WTC11 (cell line): ENCODE measurements at regions of chr21 and their contacts with region 1.

Region 1: GRCh38 chr21:38159355-38159754 is 97.4 kb upstream of the KCNJ15 start:
- DNase-seq: peak; percentile 71
- ATAC-seq: peak; percentile 82
- H3K4me3 Mint-ChIP-seq: no peak overlapping the region
- H3K27ac Mint-ChIP-seq: no peak overlapping the region
- H3K4me1 Mint-ChIP-seq: no peaks in the 10 kb centered on the region
- H3K27me3 Mint-ChIP-seq: peaks cover 2% of the 10 kb centered on the region; the same call in 1 of the 2 replicates
- CTCF ChIP-seq: peak; percentile 79

Region 2: GRCh38 chr21:38037416-38037815 is 121.9 kb before region 1 on chr21:
- CTCF ChIA-PET with region 1: no interaction called
- POLR2A ChIA-PET with region 1: no interaction called
- DNase-seq: no peak
- ATAC-seq: no peak
- H3K4me3 Mint-ChIP-seq: no peak overlapping the region
- H3K27ac Mint-ChIP-seq: no peak overlapping the region
- H3K4me1 Mint-ChIP-seq: peaks cover 13% of the 10 kb centered on the region
- H3K27me3 Mint-ChIP-seq: no peaks in the 10 kb centered on the region
- CTCF ChIP-seq: no peak

Region 3: DNA sequence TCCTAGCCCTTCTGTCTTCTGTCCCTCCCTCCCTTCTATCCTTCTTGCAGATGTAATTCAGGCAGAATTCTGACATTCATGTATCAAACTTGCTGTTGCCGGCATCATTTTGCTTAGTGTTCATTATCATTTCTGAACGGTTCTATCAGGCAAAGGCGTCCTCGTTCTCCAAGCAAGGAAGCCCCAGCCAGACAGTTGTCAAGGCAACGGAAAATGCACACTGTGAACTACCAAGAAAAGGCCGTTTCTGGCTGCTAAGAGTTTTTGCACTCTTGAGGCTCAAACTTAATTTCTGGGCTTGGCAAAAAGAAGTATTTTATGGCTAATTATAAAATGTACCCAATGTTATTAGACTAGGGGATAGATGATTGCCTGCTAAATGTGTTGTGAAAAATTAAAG is 67.3 kb before region 1 on chr21:
- CTCF ChIA-PET with region 1: no interaction called
- POLR2A ChIA-PET with region 1: no interaction called
- DNase-seq: no peak
- ATAC-seq: no peak
- H3K4me3 Mint-ChIP-seq: no peak overlapping the region
- H3K27ac Mint-ChIP-seq: no peak overlapping the region
- H3K4me1 Mint-ChIP-seq: no peaks in the 10 kb centered on the region
- H3K27me3 Mint-ChIP-seq: no peaks in the 10 kb centered on the region
- CTCF ChIP-seq: no peak

Region 4: GRCh38 chr21:38170280-38170679 is 10.9 kb after region 1 on chr21:
- CTCF ChIA-PET with region 1: interaction called, 12 read pairs
- POLR2A ChIA-PET with region 1: no interaction called
- DNase-seq: peak; percentile 44
- ATAC-seq: peak; percentile 31
- H3K4me3 Mint-ChIP-seq: no peak overlapping the region
- H3K27ac Mint-ChIP-seq: no peak overlapping the region
- H3K4me1 Mint-ChIP-seq: peaks cover 35% of the 10 kb centered on the region
- H3K27me3 Mint-ChIP-seq: no peaks in the 10 kb centered on the region
- CTCF ChIP-seq: no peak; the same call in 1 of the 2 replicates